Activated CD4-positive, alpha-beta T cell treated with anti-CD3 and anti-CD28 coated beads for 36 hours (primary cell): ENCODE measurements at regions of chr3 and their contacts with region 1.

Region 1: GRCh38 chr3:106176734-106177133 is 307.9 kb upstream of the CBLB start:
- DNase-seq: peak; percentile 74
- ATAC-seq: peak; percentile 89
- H3K4me3 Mint-ChIP-seq: peak overlapping the region; percentile 52
- H3K27ac Mint-ChIP-seq: peak overlapping the region; percentile 92
- H3K4me1 Mint-ChIP-seq: peaks cover 66% of the 10 kb centered on the region
- H3K27me3 Mint-ChIP-seq: no peaks in the 10 kb centered on the region

Region 2: DNA sequence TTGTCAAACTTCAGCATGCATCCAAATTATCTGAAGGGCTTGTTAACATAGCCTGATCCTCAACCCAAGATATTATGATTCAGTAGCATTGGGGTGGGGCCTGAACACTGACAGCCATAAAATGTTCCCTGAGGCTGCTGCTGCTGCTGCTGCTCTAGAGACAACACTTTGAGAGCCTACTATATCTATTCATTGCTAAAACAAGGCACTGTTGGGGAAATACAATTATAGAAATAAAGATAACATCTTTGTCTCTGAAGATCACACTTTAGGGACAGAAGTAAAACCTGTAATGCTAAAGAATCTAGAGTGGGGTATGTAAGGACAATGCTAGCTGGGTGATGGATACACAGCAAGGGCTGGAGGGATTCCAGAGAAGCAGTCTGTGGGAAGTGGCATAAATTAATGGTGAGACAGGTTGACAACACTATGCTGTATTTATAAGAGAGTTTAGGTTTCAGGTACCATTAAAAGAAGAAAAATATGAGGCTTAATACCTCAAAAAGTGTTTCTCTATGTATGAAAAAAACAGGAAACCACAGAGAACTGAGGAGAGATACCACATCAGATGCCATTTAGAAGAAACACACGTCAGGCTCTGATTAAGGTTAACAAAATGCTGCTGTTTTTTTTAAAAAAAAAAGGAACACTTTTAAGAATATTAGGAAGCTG is 423.9 kb before region 1 on chr3:
- CTCF ChIA-PET with region 1: no interaction called
- POLR2A ChIA-PET with region 1: no interaction called
- intact Hi-C with region 1: loop called in 1 of 2 experiments (anchors 10 kb)
- DNase-seq: peak; percentile 55
- ATAC-seq: peak; percentile 76
- H3K4me3 Mint-ChIP-seq: peak overlapping the region; percentile 42
- H3K27ac Mint-ChIP-seq: peak overlapping the region; percentile 95
- H3K4me1 Mint-ChIP-seq: peaks cover 78% of the 10 kb centered on the region
- H3K27me3 Mint-ChIP-seq: no peaks in the 10 kb centered on the region

Region 3: DNA sequence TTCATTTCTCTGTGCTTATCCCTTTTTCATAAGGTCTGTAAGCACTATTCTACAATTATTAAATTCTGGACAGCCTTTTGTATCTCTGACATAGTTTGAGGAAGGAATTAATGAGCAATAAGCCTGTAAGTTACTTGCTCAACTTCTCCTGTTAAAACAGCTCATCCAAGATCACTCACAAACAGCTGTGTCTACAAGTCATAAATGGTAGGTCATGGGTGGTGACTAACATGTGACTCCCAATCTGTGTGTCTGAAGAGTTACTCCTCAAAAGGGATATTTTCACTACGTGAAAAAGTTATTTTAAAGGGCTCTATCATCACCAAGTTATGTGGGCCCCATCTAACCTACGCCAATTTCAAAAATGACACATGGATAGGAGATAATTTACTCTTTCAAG is 162.8 kb before region 1 on chr3:
- CTCF ChIA-PET with region 1: no interaction called
- POLR2A ChIA-PET with region 1: no interaction called
- intact Hi-C with region 1: loop called (anchors 1 kb)
- DNase-seq: peak; percentile 19
- ATAC-seq: peak; percentile 72
- H3K4me3 Mint-ChIP-seq: no peak overlapping the region
- H3K27ac Mint-ChIP-seq: peak overlapping the region; percentile 68
- H3K4me1 Mint-ChIP-seq: peaks cover 50% of the 10 kb centered on the region
- H3K27me3 Mint-ChIP-seq: no peaks in the 10 kb centered on the region

Region 4: GRCh38 chr3:106232956-106233355 is 56.2 kb after region 1 on chr3:
- CTCF ChIA-PET with region 1: no interaction called
- POLR2A ChIA-PET with region 1: no interaction called
- intact Hi-C with region 1: loop called in 1 of 2 experiments (anchors 2 kb)
- DNase-seq: no peak
- ATAC-seq: no peak
- H3K4me3 Mint-ChIP-seq: no peak overlapping the region
- H3K27ac Mint-ChIP-seq: peak overlapping the region; percentile 52
- H3K4me1 Mint-ChIP-seq: peaks cover 46% of the 10 kb centered on the region
- H3K27me3 Mint-ChIP-seq: no peaks in the 10 kb centered on the region

Region 5: DNA sequence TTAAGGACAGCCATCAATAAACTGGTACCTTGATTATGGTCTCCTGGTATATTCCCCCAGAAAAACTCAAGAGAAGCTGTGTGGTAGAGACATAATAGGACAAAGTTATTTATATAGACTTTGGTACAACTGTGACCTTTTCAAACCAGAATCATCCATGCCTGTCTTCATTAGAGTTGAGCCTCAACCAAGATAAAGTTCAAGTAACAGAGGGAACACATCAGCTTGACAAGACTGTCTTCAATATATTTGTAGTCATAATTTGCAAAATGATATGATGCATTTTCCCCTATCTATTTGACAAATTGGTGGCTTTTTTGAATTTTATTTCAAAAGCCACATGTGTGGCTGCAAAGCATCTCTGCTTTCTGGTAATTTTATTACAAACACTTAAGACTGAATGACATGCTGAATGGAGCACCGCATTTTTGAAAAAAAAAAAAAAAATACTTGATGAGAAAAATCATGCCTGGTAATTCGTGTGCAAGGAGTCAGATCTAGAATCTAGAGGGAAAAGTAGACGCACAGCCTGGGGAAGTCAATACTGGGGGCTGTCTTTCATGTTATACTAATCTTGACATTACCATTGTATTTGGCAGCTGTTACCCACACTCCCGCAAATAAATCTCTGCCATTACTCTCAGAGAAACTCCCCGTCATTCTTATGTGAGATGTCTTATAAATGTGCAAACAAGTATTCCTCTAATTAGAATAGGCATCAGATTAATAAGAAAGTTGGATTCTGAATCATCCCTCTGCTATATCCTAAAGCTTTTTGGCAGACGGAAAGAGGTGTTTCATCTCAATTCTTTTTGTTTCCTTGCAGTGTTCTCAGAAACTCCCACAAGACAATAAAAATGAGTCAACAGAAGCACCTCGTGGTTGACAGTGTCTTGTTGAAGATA is 246.8 kb after region 1 on chr3:
- CTCF ChIA-PET with region 1: interaction called, 7 read pairs
- POLR2A ChIA-PET with region 1: no interaction called
- intact Hi-C with region 1: loop called (anchors 1 kb)
- DNase-seq: peak; percentile 59
- ATAC-seq: peak; percentile 70
- H3K4me3 Mint-ChIP-seq: peak overlapping the region; percentile 47
- H3K27ac Mint-ChIP-seq: peak overlapping the region; percentile 93
- H3K4me1 Mint-ChIP-seq: peaks cover 60% of the 10 kb centered on the region
- H3K27me3 Mint-ChIP-seq: no peaks in the 10 kb centered on the region